ENCODE measurements at regions of chr20 and their contacts with region 1.

Region 1: GRCh38 chr20:45095753-45096371 is 5.1 kb downstream of the KCNS1 start:
- DNase-seq: peak in 6 of 10 donors; percentile 41 to 88 (median 59)

Region 2: DNA sequence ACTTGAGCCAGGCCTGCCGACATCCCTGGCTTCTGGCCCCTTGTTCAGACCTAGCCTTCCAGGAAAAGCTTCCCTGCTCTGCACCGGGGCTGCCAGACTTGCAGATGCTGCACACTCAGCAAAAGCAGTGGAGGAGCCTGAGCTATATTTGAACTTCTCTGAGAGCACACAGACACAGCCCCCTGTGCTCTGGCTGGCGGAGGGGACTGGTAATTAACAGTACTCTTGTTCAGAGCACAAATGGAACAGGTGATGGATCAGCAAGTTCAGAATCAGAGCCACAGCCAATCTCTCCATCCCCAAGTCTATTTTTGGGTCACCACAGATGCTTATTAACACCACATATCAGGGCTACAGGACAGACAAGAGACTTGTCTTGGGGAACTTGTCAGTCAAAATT is 257.9 kb before region 1 on chr20:
- intact Hi-C with region 1: no loop called
- DNase-seq: peak in 4 of 10 donors; percentile 15 to 84 (median 52)

Region 3: DNA sequence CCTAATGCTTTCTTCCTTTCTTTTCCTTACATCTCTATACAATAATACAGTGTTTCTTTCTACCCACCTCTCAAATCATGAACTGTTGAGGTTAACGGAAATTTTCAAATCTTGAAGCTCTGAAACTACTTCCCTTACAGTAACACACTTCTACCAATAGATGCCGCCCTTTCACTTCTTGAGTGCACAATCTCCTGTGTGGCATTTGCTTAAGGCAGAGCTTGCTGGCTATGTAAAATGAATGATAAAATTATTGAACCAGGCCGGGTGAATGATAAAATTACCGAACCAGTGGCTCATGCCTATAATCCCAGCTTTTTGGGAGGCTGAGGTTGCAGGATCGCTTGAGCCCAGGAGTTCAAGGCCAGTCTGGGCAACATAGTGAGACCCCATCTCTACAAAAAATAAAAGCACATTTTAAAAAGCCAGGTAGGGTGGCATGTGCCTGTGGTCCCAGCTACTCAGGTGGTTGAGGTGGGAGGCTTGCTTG is 51.7 kb before region 1 on chr20:
- intact Hi-C with region 1: loop called (anchors 1 kb)
- DNase-seq: peak in 2 of 10 donors; percentile 11 to 31

Region 4: GRCh38 chr20:45373353-45374100 is 277.7 kb after region 1 on chr20:
- intact Hi-C with region 1: no loop called
- DNase-seq: peak; percentile 79 to 98 (median 90)

Measured in posterior cingulate gyrus (tissue), 11 donors.